Activated CD4-positive, alpha-beta T cell treated with anti-CD3 and anti-CD28 coated beads, Interleukin-2, amount 10 ng/mL, durations not matched to agents 7 days and 5 days (primary cell): ENCODE measurements at regions of chr17 and their contacts with region 1.

Region 1: DNA sequence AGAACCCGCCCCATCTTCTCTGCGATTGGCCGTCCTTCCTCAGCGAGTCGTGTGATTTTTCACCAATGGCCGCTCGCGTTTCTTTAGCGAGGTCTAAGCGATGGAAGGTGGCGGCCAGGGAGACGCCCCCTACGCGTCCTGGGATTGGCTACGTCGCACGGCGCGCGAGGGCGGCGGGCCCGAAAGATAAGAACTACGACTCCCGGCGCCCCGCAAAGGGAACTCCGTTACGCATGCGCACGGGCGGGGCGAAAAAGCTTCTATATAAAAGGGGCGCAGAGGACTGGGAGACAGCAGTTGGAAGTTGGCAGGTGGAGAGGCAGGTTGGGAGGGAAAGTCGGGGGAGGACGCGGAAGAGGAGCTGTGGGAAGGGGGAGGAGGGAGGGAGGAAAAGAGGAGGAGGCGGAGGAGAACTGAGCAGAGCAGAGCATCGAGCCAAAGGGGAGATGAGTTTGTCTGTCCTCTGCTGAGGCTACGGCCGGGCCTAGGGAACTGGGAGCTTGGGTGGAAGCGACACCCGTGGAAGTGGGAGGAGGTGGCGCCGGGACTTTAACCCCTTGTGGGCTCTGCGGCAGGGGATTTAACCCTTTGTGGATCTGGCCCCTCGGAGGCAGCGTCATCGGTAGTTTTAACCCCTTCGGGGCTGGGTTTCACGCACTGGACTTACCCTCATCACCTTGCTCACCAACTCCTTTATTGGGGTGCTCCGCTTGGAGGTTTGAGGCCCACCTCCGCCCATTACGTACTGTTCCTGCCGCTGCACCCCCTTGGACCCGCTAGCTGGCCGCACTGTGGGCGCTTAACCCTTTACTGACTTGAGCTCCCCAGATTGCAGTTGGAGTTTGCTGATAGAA is at the start of gene HEXIM1:
- DNase-seq: peak; percentile 99
- H3K4me3 Mint-ChIP-seq: peak within 1 kb of the TSS; percentile 98
- H3K27ac Mint-ChIP-seq: peak within 1 kb of the TSS; percentile 100
- H3K4me1 Mint-ChIP-seq: peaks cover 56% of the 10 kb centered on the region
- H3K27me3 Mint-ChIP-seq: no peaks in the 10 kb centered on the region
- total RNA-seq, gene HEXIM1: 30.5 TPM

Region 2: DNA sequence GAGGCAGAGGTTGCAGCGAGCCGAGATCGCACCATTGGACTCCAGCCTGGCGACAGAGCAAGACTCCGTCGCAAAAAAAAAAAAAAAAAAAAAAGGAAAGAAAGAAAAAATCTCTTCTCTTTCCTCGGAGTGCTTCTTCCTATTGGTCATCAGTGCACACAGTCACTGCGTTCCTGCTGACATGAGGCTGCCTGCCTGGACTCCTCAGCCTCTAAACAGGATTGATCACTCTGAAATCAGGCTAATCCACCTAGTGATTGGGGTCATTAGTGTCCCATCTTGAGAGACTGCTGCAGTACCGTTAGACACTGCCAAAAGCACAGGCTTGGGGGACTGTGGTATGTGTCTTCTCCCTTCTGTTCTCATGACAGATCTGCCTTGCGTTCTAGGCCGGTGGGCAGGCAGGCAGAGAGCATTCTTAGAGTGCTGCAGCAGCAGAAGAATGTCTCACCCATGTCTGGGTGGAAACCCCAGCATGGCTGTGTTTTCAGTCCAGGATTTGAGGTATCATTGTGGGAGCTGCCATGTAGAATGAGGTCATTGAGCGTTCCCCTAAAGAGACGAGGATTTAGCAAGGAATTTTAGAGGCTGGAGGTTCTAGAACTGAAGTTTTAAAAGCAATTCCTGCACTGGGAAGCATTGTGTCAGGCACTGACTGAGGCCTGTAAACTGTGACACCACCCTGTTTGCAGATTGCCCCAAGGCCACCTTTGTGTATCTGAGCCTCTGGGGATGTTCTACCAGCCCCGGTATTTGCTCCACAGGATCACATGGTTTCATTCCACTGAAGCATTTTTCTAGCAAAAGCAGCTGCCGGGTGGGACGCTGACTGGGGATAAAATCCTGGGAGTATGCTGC is 46.6 kb before region 1 on chr17:
- CTCF ChIA-PET with region 1: no interaction called
- POLR2A ChIA-PET with region 1: no interaction called
- DNase-seq: no peak
- H3K4me3 Mint-ChIP-seq: no peak overlapping the region
- H3K27ac Mint-ChIP-seq: peak overlapping the region; percentile 9
- H3K4me1 Mint-ChIP-seq: no peaks in the 10 kb centered on the region
- H3K27me3 Mint-ChIP-seq: no peaks in the 10 kb centered on the region

Region 3: GRCh38 chr17:45161019-45161825 is 12.8 kb after region 1 on chr17:
- CTCF ChIA-PET with region 1: interaction called, 154 read pairs
- POLR2A ChIA-PET with region 1: interaction called, 24 read pairs
- DNase-seq: peak; percentile 98
- H3K4me3 Mint-ChIP-seq: peak overlapping the region; percentile 99
- H3K27ac Mint-ChIP-seq: peak overlapping the region; percentile 96
- H3K4me1 Mint-ChIP-seq: peaks cover 41% of the 10 kb centered on the region
- H3K27me3 Mint-ChIP-seq: no peaks in the 10 kb centered on the region

Region 4: DNA sequence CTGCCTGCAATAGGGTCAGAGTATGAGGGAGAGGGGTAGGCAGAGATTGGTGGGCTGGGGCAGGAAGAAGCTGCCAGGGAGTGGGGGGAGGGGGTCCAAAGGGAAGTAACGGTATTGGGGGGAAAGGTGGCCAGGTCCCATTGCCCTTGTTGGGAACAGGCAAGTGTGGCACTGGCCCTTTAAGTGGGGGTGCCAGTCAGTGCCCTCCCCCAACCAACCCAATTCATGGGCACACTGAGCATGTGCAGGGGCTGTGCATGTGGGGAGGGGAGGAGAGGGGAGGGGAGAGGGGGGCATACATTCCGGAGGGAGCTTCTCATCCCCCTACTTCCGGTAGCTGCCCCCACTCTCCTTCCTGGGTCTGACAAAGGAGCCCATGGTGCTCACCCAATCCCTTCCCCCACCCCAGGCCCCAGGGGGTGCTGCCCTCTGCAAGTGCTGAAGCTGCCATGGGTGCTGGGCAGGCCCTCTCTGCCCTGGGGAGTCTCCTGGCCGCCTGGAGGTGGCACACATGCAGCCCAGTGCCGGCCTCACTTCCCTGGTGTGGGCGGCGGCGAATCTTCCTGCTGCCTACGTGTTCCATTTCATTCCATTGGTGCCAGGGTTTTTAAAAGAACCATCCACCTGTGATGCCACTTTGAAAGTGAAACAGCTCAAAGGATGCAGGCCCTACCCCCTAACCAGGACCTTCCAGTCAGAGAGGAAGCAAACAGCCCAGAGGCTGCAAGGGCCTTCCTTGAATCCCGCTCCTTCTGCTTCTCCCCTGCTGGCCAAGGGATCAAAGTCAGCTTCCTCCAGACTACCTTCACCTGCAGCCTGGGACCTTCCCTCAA is 24.3 kb after region 1 on chr17:
- CTCF ChIA-PET with region 1: interaction called, 17 read pairs
- POLR2A ChIA-PET with region 1: no interaction called
- DNase-seq: peak; percentile 66
- H3K4me3 Mint-ChIP-seq: peak overlapping the region; percentile 71
- H3K27ac Mint-ChIP-seq: peak overlapping the region; percentile 98
- H3K4me1 Mint-ChIP-seq: peaks cover 24% of the 10 kb centered on the region
- H3K27me3 Mint-ChIP-seq: no peaks in the 10 kb centered on the region

Region 5: DNA sequence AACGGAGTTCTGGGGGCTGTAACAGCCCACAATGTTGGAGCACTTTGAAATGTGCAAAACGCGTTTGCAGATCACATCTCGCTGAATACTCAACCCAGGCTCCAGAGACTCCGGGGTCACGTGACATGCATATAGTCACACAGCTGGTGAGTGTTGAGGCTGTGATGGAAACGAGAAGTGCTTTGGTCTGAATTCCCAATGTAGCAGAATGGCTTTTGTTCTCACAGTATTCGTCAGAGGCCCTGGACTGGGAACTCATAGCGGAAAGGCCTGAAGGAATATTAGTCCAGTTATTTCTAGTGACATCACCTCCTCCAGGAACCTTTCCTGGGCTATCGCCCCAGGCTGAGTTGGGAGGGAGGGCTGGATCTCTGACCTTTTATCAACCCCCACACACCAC is 539.9 kb after region 1 on chr17:
- CTCF ChIA-PET with region 1: no interaction called
- POLR2A ChIA-PET with region 1: no interaction called
- DNase-seq: no peak
- H3K4me3 Mint-ChIP-seq: no peak overlapping the region
- H3K27ac Mint-ChIP-seq: no peak overlapping the region
- H3K4me1 Mint-ChIP-seq: no peaks in the 10 kb centered on the region
- H3K27me3 Mint-ChIP-seq: peaks cover 29% of the 10 kb centered on the region